ENCODE measurements at regions of chr12 and their contacts with region 1.

Region 1: DNA sequence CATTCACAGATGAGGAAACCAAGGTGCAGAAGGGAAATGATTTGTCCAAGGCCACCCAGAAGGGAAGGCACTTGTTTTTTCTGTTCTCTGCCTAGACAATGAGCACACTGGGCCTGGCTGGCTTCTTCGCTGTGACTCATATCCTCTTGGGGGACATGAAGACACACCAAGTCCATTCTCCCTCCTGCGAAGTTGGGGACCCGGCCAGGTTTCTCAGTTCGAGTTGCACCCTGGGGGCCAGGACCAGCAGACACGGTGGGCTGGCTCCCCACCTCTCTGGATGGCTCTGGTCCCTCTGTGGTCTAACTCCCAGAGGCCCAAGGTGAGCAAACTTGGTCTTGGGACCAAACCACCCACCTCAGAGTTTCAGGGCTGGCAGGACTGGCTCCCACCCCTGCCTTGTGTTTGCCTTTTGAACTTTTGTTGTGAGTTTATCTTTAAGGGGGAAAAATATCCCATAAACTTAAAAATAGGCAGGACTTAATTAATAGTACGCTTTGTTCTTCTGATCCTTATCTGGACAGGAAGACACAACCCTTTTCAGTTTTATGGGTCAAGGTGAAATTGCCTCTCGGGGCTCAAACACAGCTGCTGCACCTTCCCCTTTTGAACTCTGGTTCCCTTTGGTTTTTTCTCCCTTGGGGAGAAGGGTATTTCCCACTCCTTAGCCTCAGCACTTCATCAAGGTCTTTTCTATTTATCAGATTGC is 9.0 kb upstream of the MLEC start:
- DNase-seq: peak; percentile 82
- ATAC-seq: peak; percentile 89
- H3K4me3 ChIP-seq: no peak overlapping the region
- H3K27ac ChIP-seq: peak overlapping the region; percentile 86
- H3K4me1 ChIP-seq: peaks cover 50% of the 10 kb centered on the region
- H3K27me3 ChIP-seq: no peaks in the 10 kb centered on the region
- CTCF ChIP-seq: no peak
- EP300 ChIP-seq: peak; percentile 12 to 24; a peak in 1 of 4 replicates
- POLR2A ChIP-seq: peak; percentile 38; the same call in 1 of the 2 replicates
- RAD21 ChIP-seq: no peak

Region 2: DNA sequence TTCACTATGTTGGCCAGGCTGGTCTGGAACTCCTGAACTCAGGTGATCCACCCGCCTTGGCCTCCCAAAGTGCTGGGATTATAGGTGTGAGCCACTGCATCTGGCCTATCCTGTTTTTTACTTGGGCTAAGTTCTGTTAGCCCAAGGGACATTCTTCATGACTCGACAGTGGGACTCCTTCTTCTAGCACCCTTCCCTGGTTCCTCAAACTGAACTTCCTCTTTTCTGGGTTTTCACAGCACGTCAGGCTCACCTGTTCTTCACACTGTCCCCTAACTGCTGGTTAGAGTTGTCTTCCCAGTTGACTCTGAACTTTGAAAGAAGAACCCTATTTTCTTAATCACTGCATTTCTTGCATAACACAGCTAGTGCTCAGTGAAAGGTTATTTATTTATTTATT is 15.0 kb before region 1 on chr12:
- CTCF ChIA-PET with region 1: interaction called, 5 read pairs
- POLR2A ChIA-PET with region 1: interaction called, 57 read pairs
- RAD21 ChIA-PET with region 1: interaction called, 12 read pairs
- SMC1A ChIA-PET with region 1: interaction called, 31 read pairs
- in situ Hi-C with region 1: no loop called
- intact Hi-C with region 1: no loop called
- DNase-seq: peak; percentile 67
- ATAC-seq: peak; percentile 95
- H3K4me3 ChIP-seq: no peak overlapping the region
- H3K27ac ChIP-seq: no peak overlapping the region
- H3K4me1 ChIP-seq: peaks cover 9% of the 10 kb centered on the region
- H3K27me3 ChIP-seq: no peaks in the 10 kb centered on the region
- CTCF ChIP-seq: no peak
- EP300 ChIP-seq: 0 out of 4 replicates have a peak, but pooled peaks of 1 of the 2 experiments have one; percentile 59
- POLR2A ChIP-seq: no peak
- RAD21 ChIP-seq: 0 out of 2 replicates have a peak, but pooled peaks have one; percentile 4

Measured in GM12878 (cell line).